Activated CD4-positive, alpha-beta T cell treated with anti-CD3 and anti-CD28 coated beads, Interleukin-2, amount 10 ng/mL, durations not matched to agents 7 days and 5 days (primary cell): ENCODE measurements at regions of chr1 and their contacts with region 1.

Region 1: DNA sequence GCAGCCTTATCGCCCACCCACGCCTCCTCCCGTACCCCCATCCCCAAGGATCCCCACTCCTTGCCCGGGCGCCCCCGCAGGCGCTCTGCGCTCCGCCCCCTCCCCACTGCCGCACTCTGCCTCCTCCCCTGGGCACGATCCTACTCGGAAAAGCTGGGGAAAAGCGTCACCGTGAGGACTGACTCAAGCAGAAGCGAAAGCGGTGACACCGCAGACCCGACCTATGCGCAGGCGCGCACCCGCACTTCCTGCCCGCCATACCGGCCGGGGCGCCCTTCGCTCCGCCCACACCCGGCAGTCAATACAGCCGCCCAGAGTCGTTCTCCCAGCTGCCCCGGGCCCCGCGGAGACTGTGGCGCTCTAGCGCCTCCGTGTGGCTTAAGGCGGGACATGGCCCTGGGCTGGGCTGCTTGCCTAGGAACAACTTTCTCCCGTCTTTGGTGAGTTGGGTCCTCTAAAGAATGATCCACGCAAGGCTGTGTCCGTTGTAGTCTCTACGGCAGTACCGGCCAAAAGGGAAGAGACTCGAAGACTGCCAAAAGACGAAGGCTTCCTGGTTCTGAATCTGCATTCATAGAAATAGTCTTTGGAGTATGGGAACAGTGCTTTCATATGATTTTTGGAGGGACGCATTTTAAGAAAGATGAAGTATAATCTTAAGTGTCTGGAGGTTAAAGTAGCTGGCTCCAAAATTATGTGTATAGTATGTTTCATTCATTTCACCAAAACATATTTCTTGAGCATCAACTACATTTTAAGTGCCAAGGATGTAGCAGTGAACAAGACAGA is at the start of gene OMA1:
- DNase-seq: peak; percentile 95
- H3K4me3 Mint-ChIP-seq: peak within 1 kb of the TSS; percentile 84
- H3K27ac Mint-ChIP-seq: peak within 1 kb of the TSS; percentile 95
- H3K4me1 Mint-ChIP-seq: peaks cover 18% of the 10 kb centered on the region
- H3K27me3 Mint-ChIP-seq: peaks cover 8% of the 10 kb centered on the region
- total RNA-seq, gene OMA1: 19.1 to 23.5 TPM

Region 2: GRCh38 chr1:57772580-57773195 is 774.0 kb before region 1 on chr1:
- CTCF ChIA-PET with region 1: no interaction called
- POLR2A ChIA-PET with region 1: no interaction called
- DNase-seq: no peak
- H3K4me3 Mint-ChIP-seq: no peak overlapping the region
- H3K27ac Mint-ChIP-seq: no peak overlapping the region
- H3K4me1 Mint-ChIP-seq: no peaks in the 10 kb centered on the region
- H3K27me3 Mint-ChIP-seq: no peaks in the 10 kb centered on the region

Region 3: DNA sequence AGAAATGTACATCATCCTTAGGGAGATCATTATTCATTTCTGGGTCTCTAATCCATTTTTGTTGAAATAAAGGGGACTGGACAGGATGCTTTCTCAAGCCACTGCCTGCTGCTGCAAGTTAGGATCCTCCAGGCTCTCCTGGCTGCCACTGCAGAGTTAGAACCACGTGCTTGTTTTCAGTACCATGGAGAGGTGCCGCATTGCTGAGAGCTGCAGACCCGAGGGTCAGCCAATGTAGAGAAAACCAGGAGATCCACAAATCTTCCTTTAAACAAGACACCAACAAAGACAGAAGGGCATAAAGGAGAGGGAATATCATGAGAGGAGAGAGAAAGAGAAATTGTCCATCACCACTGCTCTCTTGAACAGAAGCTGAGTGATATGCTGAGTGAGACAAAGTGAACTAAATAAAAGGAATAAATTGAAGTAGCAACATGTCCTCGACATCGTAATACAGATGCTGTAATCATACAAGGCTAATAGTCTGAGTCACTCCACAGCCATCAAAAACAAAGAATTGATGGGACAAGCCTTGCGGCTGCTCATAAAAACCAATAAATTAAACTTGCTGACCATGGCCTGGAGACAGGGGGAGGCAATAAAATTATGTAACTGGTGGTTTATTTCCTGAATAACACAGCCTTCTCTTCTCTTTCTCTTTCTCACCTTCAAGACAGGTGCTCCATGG is 255.9 kb before region 1 on chr1:
- CTCF ChIA-PET with region 1: no interaction called
- POLR2A ChIA-PET with region 1: no interaction called
- DNase-seq: no peak
- H3K4me3 Mint-ChIP-seq: no peak overlapping the region
- H3K27ac Mint-ChIP-seq: no peak overlapping the region
- H3K4me1 Mint-ChIP-seq: no peaks in the 10 kb centered on the region
- H3K27me3 Mint-ChIP-seq: no peaks in the 10 kb centered on the region

Region 4: GRCh38 chr1:58515794-58516401 is 30.8 kb before region 1 on chr1:
- CTCF ChIA-PET with region 1: interaction called, 23 read pairs
- POLR2A ChIA-PET with region 1: interaction called, 4 read pairs
- DNase-seq: peak; percentile 53
- H3K4me3 Mint-ChIP-seq: no peak overlapping the region
- H3K27ac Mint-ChIP-seq: peak overlapping the region; percentile 38
- H3K4me1 Mint-ChIP-seq: peaks cover 8% of the 10 kb centered on the region
- H3K27me3 Mint-ChIP-seq: no peaks in the 10 kb centered on the region

Region 5: GRCh38 chr1:58528518-58528917 is 18.2 kb before region 1 on chr1:
- CTCF ChIA-PET with region 1: interaction called, 11 read pairs
- POLR2A ChIA-PET with region 1: no interaction called
- DNase-seq: no peak
- H3K4me3 Mint-ChIP-seq: no peak overlapping the region
- H3K27ac Mint-ChIP-seq: no peak overlapping the region
- H3K4me1 Mint-ChIP-seq: peaks cover 8% of the 10 kb centered on the region
- H3K27me3 Mint-ChIP-seq: no peaks in the 10 kb centered on the region